Activated CD4-positive, alpha-beta T cell treated with anti-CD3 and anti-CD28 coated beads, Interleukin-2, amount 10 ng/mL, durations not matched to agents 24 days and 14 days (primary cell): ENCODE measurements at regions of chr9 and their contacts with region 1.

Region 1: GRCh38 chr9:72526901-72527800 is 5.7 kb downstream of the TMC1 start:
- DNase-seq: peak; percentile 94
- H3K4me3 Mint-ChIP-seq: peak overlapping the region; percentile 73
- H3K27ac Mint-ChIP-seq: peak overlapping the region; percentile 96
- H3K4me1 Mint-ChIP-seq: peaks cover 56% of the 10 kb centered on the region
- H3K27me3 Mint-ChIP-seq: no peaks in the 10 kb centered on the region

Region 2: DNA sequence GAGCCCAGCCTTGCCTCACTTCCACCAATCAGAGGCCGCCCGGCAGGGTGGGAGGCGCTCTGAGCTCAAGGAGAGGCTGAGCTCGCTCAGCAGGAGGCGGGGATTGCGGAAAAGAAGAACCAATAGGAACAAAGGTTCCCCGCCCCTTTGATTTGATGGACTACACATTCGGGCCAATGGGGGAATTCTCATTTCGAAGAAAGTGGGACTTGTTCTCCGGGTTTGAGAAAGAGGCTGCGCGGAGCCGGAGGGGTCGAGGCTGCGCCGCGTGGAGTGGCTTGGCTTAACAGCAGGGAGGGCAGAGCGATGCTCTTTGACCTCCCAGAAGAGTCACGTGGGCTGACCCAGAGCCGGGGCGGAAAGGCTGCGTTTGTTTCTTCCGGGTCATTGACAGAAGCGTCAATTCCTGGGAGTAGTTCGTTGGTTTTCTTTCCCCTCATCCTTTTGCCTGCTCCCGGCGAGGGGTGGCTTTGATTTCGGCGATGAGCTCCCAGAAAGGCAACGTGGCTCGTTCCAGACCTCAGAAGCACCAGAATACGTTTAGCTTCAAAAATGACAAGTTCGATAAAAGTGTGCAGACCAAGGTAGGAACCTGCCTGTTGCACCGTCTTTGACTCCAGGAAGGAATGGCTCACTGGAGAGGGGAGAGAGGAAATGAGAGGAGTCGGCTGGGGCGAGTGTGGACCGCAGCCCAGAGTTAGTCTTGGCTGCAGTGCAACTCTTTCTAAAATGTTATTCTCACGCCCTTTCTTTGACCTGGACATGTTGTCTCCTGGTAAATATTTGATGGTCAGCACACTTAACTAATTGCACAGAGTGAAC is 615.7 kb before region 1 on chr9 and contains the start of gene C9orf85:
- intact Hi-C with region 1: loop called (anchors 5 kb)
- DNase-seq: peak; percentile 99
- H3K4me3 Mint-ChIP-seq: peak within 1 kb of the TSS; percentile 100
- H3K27ac Mint-ChIP-seq: peak within 1 kb of the TSS; percentile 99
- H3K4me1 Mint-ChIP-seq: peaks cover 56% of the 10 kb centered on the region
- H3K27me3 Mint-ChIP-seq: no peaks in the 10 kb centered on the region
- total RNA-seq, gene C9orf85: 9.4 and 11.6 TPM in 2 replicates

Region 3: GRCh38 chr9:72443855-72444254 is 83.3 kb before region 1 on chr9:
- intact Hi-C with region 1: loop called (anchors 1 kb)
- DNase-seq: peak; percentile 66
- H3K4me3 Mint-ChIP-seq: peak overlapping the region; percentile 33
- H3K27ac Mint-ChIP-seq: peak overlapping the region; percentile 81
- H3K4me1 Mint-ChIP-seq: peaks cover 32% of the 10 kb centered on the region
- H3K27me3 Mint-ChIP-seq: peaks cover 3% of the 10 kb centered on the region

Region 4: DNA sequence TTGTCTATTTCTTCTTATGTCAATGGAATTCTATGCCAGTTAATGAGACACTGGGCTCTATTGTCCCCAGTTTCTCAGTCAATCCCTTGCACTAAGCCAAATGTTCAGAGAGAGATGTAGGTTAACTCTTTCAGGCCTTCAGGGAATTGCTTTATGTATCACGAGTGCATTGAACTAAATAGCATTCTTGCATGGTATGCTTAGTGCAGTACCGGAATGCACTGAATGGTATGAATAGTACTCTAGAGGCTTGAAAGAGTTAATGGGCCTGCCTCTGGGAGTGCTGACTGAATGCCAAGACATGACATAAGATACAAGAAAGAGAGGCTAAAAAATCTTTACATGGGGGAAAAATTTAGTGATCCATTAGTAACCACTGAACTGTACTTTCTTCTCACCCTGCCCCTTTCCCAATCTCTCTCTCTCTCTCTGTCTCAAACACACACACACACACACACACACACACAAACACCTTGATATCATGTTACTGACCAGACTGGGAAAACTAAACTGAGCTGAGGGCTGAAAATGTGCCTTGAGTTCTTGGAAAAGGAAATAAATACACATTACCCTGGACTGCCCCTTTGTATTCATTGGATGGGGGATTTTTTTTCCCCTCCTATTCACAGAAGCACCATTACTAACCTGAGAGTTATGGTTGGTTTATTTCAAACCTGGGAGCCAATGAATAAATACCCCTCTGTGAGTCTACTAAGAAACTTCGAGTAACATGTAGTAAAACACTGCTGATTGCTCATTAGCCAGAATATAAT is 41.1 kb before region 1 on chr9:
- intact Hi-C with region 1: no loop called
- DNase-seq: no peak
- H3K4me3 Mint-ChIP-seq: no peak overlapping the region
- H3K27ac Mint-ChIP-seq: no peak overlapping the region
- H3K4me1 Mint-ChIP-seq: no peaks in the 10 kb centered on the region
- H3K27me3 Mint-ChIP-seq: peaks cover 3% of the 10 kb centered on the region

Region 5: GRCh38 chr9:72509635-72510034 is 17.5 kb before region 1 on chr9:
- intact Hi-C with region 1: loop called (anchors 1 kb)
- DNase-seq: no peak
- H3K4me3 Mint-ChIP-seq: peak overlapping the region; percentile 64
- H3K27ac Mint-ChIP-seq: peak overlapping the region; percentile 83
- H3K4me1 Mint-ChIP-seq: peaks cover 19% of the 10 kb centered on the region
- H3K27me3 Mint-ChIP-seq: no peaks in the 10 kb centered on the region

Region 6: DNA sequence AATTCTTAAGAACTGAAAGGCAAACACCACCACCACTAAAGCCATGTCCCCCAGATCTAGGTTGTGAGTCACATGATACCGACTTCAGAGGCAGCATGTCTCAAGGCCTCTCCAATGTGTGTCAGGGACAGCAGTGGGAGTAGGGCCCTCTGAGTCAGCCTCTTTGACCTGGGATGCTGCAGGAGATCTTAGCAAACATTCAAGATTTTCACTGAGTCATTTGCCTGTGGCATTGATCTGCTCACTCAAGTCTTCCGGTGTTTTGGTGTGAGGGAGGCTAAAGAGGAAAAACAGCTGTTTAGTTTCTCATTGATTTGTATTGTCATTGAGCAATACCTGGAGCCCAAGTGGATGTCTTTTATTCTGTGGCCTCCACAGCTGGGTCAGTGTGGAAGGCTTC is 30.4 kb after region 1 on chr9:
- intact Hi-C with region 1: loop called (anchors 1 kb)
- DNase-seq: peak; percentile 79
- H3K4me3 Mint-ChIP-seq: peak overlapping the region; percentile 28
- H3K27ac Mint-ChIP-seq: peak overlapping the region; percentile 79
- H3K4me1 Mint-ChIP-seq: peaks cover 16% of the 10 kb centered on the region
- H3K27me3 Mint-ChIP-seq: no peaks in the 10 kb centered on the region

Region 7: DNA sequence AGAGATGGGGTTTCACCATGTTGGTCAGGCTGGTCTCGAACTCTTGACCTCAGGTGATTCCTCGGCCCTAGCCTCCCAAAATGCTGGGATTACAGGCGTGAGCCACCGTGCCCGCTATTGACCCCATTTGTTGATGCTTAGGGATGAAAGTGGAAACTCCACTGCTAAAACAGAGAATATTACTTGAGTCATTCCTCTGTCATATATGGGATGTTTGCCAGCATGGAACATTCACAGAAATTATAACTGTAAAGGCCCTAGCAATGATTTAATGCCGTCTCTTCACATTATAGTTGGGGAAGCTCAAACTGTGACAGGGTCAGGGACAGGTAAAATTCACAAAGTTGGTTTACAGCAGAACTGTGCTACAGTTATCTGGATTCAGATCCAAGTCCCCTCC is 88.8 kb after region 1 on chr9:
- intact Hi-C with region 1: no loop called
- DNase-seq: no peak
- H3K4me3 Mint-ChIP-seq: no peak overlapping the region
- H3K27ac Mint-ChIP-seq: no peak overlapping the region
- H3K4me1 Mint-ChIP-seq: no peaks in the 10 kb centered on the region
- H3K27me3 Mint-ChIP-seq: peaks cover 10% of the 10 kb centered on the region

Region 8: GRCh38 chr9:72635197-72635596 is 108.0 kb after region 1 on chr9:
- intact Hi-C with region 1: loop called (anchors 1 kb)
- DNase-seq: peak; percentile 72
- H3K4me3 Mint-ChIP-seq: no peak overlapping the region
- H3K27ac Mint-ChIP-seq: no peak overlapping the region
- H3K4me1 Mint-ChIP-seq: peaks cover 9% of the 10 kb centered on the region
- H3K27me3 Mint-ChIP-seq: peaks cover 6% of the 10 kb centered on the region

Region 9: GRCh38 chr9:72882117-72882775 is 355.1 kb after region 1 on chr9:
- intact Hi-C with region 1: no loop called
- DNase-seq: no peak
- H3K4me3 Mint-ChIP-seq: no peak overlapping the region
- H3K27ac Mint-ChIP-seq: no peak overlapping the region
- H3K4me1 Mint-ChIP-seq: no peaks in the 10 kb centered on the region
- H3K27me3 Mint-ChIP-seq: no peaks in the 10 kb centered on the region